HepG2 (cell line): ENCODE measurements at regions of chr12 and their contacts with region 1.

Region 1: DNA sequence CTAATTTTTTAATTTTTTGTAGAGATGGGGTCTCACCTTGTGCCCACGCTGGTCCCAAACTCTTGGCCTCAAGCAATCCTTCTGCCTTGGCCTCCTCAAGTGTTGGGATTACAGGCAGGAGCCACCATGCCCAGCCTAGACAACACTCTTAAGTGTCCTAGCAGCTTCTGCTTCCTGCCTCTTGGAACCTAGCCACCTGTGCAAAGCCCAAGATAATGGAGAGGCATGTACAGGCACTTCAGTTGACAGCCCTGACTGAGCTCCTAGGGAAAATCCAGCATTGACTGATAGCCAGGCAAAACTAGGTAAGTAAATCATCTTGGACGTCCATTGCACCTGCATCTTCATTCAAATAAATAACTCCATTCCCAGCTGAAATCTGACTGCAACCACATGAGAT is 15.5 kb downstream of the COX14 start:
- DNase-seq: no peak
- ATAC-seq: no peak
- H3K4me3 ChIP-seq: no peak overlapping the region
- H3K27ac ChIP-seq: no peak overlapping the region
- H3K4me1 ChIP-seq: no peaks in the 10 kb centered on the region
- H3K27me3 ChIP-seq: no peaks in the 10 kb centered on the region
- CTCF ChIP-seq: no peak
- EP300 ChIP-seq: no peak
- POLR2A ChIP-seq: no peak
- RAD21 ChIP-seq: no peak

Region 2: DNA sequence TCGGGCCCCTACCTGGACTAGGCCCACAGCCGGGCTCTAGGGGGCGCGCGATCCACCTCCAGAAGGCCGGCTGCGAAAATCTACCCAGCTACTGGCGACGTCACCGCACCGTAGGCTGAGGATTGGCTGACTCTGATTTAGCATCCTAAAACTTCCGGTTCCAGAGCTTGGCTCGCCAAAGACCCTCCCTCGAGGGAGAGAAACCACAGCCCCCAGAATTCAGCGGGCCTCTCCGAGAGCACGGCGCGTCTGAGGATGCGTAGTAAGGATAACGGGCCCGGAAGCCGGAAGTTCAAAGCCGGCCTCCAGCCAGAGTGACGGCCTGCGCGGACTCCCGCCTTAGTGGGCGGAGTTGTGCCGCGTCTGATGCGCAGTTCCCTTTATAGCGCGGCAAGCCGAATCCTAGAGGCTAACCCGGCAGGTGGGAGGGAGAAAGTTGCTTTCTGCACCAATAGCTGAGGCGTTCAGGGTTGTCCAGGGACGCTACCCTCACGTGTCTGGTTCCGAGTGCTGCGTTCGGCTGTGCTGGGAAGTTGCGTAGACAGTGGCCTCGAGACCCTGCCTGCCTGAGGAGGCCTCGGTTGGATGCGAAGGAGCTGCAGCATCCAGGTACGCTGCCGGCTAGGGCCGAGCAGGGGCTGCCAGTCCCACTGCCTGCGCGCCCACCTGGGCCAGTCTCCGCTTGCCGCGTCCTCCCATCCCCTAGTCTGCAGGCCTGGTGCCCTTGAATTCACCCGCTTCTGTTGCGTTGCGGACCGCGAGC is 15.7 kb before region 1 on chr12 and contains the start of gene COX14:
- CTCF ChIA-PET with region 1: no interaction called
- POLR2A ChIA-PET with region 1: interaction called, 16 read pairs
- in situ Hi-C with region 1: no loop called
- intact Hi-C with region 1: no loop called
- DNase-seq: peak; percentile 99
- ATAC-seq: peak; percentile 82
- H3K4me3 ChIP-seq: peak within 1 kb of the TSS; percentile 90 to 94 (median 92)
- H3K27ac ChIP-seq: peak within 1 kb of the TSS; percentile 95
- H3K4me1 ChIP-seq: peaks cover 56% of the 10 kb centered on the region
- H3K27me3 ChIP-seq: no peaks in the 10 kb centered on the region; a peak in 1 of 5 replicates
- CTCF ChIP-seq: peak; percentile 97
- EP300 ChIP-seq: peak in 1 of 2 experiments; percentile 21; a peak in 1 of 4 replicates
- POLR2A ChIP-seq: peak in 1 of 2 experiments; percentile 97; a peak in 2 of 4 replicates
- RAD21 ChIP-seq: peak; percentile 50
- total RNA-seq, gene COX14: 71.6 and 82.0 TPM in 2 replicates

Region 3: DNA sequence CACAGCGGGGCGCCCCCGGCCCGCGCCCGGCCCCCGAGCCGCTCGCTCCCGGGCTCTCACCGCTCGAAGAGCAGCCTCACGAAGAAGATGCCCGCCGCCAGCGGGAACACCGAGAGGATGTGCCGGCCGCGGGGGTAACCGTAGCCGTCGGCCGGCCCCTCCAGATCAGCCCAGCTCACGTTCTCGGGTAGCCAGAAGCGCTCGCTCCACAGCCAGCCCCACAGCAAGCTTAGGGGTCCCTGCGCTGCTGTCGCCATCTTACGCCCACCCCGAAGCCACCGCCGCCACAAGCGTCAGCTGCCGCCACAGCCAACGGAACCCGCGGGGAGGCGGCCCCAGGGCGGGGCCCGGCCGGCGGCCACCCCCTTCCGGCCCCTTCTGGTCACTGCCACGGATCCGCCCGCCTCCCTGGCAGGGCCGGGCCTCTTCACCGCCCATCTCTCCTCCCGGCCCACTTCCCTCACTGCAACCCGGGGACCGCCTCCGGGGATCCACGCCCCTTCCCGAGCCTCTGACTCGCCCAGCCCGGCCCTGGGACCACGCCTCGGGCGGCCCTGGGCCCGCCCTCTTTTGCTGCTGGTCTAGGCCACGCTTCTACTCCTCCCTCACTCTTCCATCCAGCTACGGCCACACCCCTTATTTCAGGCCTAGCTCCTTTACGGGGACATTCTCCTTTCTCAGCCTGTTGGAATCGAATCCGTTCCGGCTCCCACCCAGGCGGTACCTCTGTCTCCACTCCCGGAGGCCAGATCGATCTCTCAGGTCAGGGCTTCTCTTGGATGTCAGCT is 39.7 kb after region 1 on chr12 and contains the start of gene CERS5:
- CTCF ChIA-PET with region 1: no interaction called
- POLR2A ChIA-PET with region 1: interaction called, 11 read pairs
- in situ Hi-C with region 1: no loop called
- intact Hi-C with region 1: no loop called
- DNase-seq: peak; percentile 96
- ATAC-seq: peak; percentile 98
- H3K4me3 ChIP-seq: peak within 1 kb of the TSS; percentile 80 to 98 (median 93)
- H3K27ac ChIP-seq: peak within 1 kb of the TSS; percentile 90
- H3K4me1 ChIP-seq: peaks cover 51% of the 10 kb centered on the region
- H3K27me3 ChIP-seq: no peaks in the 10 kb centered on the region; a peak in 1 of 5 replicates
- CTCF ChIP-seq: no peak; the same call in none of the 2 replicates
- EP300 ChIP-seq: 0 out of 4 replicates have a peak, but pooled peaks of 1 of the 2 experiments have one; percentile 3
- POLR2A ChIP-seq: peak; percentile 71 to 87
- RAD21 ChIP-seq: peak; percentile 67
- total RNA-seq, gene CERS5: 15.3 and 22.3 TPM in 2 replicates

Region 4: DNA sequence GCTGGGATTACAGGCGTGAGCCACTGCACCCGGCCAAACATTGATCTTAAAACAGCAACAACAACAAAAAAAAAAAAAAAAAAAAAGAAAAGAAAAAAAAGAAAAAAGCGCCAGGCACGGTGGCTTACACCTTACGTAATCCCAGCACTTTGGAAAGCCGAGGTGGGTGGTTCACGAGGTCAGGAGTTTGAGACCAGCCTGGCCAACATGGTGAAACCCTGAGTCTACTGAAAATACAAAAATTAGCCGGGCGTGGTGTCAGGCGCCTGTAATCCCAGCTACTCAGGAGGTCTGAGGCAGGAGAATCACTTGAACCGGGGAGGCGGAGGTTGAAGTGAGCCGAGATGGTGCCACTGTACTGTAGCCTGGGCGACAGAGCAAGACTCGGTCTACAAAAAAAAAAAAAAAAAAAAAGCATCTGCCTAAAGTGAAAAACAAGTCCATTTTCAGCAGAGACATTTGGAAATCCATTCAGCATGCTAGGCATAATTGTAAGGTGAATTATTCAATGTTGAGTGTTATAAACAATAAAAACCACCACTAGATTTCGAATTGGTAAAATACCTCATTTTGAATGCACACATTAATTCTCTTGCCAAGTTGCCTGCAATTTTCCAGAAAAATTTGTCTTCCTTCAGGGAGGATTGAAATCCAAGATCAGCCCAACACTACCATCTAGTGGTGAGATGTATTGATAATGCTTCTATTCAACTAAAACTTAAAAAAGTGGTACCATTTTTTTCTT is 47.6 kb after region 1 on chr12:
- CTCF ChIA-PET with region 1: interaction called, 31 read pairs
- POLR2A ChIA-PET with region 1: no interaction called
- in situ Hi-C with region 1: loop called (anchors 5 kb)
- intact Hi-C with region 1: no loop called
- DNase-seq: peak; percentile 62
- ATAC-seq: no peak
- H3K4me3 ChIP-seq: no peak overlapping the region
- H3K27ac ChIP-seq: no peak overlapping the region
- H3K4me1 ChIP-seq: peaks cover 6% of the 10 kb centered on the region
- H3K27me3 ChIP-seq: no peaks in the 10 kb centered on the region
- CTCF ChIP-seq: peak; percentile 71
- EP300 ChIP-seq: no peak
- POLR2A ChIP-seq: no peak
- RAD21 ChIP-seq: peak; percentile 62; the same call in 1 of the 2 replicates

Region 5: GRCh38 chr12:50375802-50376201 is 248.3 kb after region 1 on chr12:
- CTCF ChIA-PET with region 1: no interaction called
- POLR2A ChIA-PET with region 1: no interaction called
- in situ Hi-C with region 1: no loop called
- intact Hi-C with region 1: no loop called
- DNase-seq: no peak
- ATAC-seq: peak; percentile 64
- H3K4me3 ChIP-seq: no peak overlapping the region
- H3K27ac ChIP-seq: no peak overlapping the region
- H3K4me1 ChIP-seq: no peaks in the 10 kb centered on the region
- H3K27me3 ChIP-seq: no peaks in the 10 kb centered on the region
- CTCF ChIP-seq: no peak
- EP300 ChIP-seq: no peak
- POLR2A ChIP-seq: no peak
- RAD21 ChIP-seq: no peak